ENCODE measurements at regions of chr5 and their contacts with region 1.

Region 1: DNA sequence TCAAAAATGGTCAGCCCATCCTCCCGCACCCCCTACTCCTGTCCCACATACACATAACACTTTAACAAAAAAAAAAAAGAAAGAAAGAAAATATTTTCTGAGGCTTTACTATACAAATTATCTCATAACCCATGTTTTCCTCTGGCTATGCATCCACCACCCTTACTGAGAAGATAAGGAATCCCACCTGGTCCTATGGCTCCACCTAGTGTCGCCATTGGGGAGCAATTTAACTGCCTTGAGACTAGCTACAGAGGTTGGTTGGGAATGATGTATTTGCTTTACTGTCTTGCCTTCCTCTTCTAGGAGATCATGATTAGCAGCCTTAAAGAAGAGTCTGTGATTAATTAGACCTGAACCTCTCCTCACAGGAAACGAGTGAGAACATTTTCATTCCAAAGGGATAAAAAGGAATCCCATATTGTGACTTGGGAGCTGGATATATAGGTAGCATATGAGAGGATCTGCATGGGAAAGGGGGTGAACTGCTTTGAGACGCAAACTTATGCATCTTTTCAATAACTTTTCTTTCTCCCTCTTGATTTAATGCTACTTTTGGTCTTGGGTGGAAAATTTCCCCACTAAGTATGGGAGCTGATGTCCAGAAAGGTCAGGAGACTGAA is 77.7 kb upstream of the SELENOP start:
- DNase-seq: peak; percentile 31 to 75 (median 59)
- ATAC-seq: peak; percentile 79
- H3K4me3 ChIP-seq: no peak overlapping the region
- H3K4me3 Mint-ChIP-seq: no peak overlapping the region
- H3K27ac ChIP-seq: no peak overlapping the region
- H3K27ac Mint-ChIP-seq: no peak overlapping the region
- H3K4me1 ChIP-seq: no peaks in the 10 kb centered on the region
- H3K4me1 Mint-ChIP-seq: no peaks in the 10 kb centered on the region
- H3K27me3 ChIP-seq: no peaks in the 10 kb centered on the region
- H3K27me3 Mint-ChIP-seq: peaks cover 7% of the 10 kb centered on the region
- CTCF ChIP-seq: peak; percentile 84

Region 2: GRCh38 chr5:42057254-42057690 is 832.1 kb before region 1 on chr5:
- CTCF ChIA-PET with region 1: interaction called, 3 read pairs
- POLR2A ChIA-PET with region 1: no interaction called
- intact Hi-C with region 1: loop called in 1 of 2 experiments (anchors 10 kb)
- DNase-seq: peak; percentile 26 to 69 (median 53)
- ATAC-seq: peak; percentile 84
- H3K4me3 ChIP-seq: no peak overlapping the region
- H3K4me3 Mint-ChIP-seq: no peak overlapping the region
- H3K27ac ChIP-seq: no peak overlapping the region
- H3K27ac Mint-ChIP-seq: no peak overlapping the region
- H3K4me1 ChIP-seq: no peaks in the 10 kb centered on the region
- H3K4me1 Mint-ChIP-seq: no peaks in the 10 kb centered on the region
- H3K27me3 ChIP-seq: no peaks in the 10 kb centered on the region
- H3K27me3 Mint-ChIP-seq: peaks cover 10% of the 10 kb centered on the region
- CTCF ChIP-seq: peak; percentile 64

Region 3: GRCh38 chr5:42514754-42515153 is 374.7 kb before region 1 on chr5:
- CTCF ChIA-PET with region 1: no interaction called
- POLR2A ChIA-PET with region 1: no interaction called
- intact Hi-C with region 1: loop called in 1 of 2 experiments (anchors 2 kb)
- DNase-seq: peak in 2 of 9 experiments; percentile 16 to 28
- ATAC-seq: no peak
- H3K4me3 ChIP-seq: no peak overlapping the region
- H3K4me3 Mint-ChIP-seq: no peak overlapping the region
- H3K27ac ChIP-seq: no peak overlapping the region
- H3K27ac Mint-ChIP-seq: no peak overlapping the region
- H3K4me1 ChIP-seq: no peaks in the 10 kb centered on the region
- H3K4me1 Mint-ChIP-seq: no peaks in the 10 kb centered on the region
- H3K27me3 ChIP-seq: no peaks in the 10 kb centered on the region
- H3K27me3 Mint-ChIP-seq: no peaks in the 10 kb centered on the region
- CTCF ChIP-seq: no peak

Region 4: GRCh38 chr5:42583322-42583721 is 306.1 kb before region 1 on chr5:
- CTCF ChIA-PET with region 1: no interaction called
- POLR2A ChIA-PET with region 1: no interaction called
- intact Hi-C with region 1: loop called in 1 of 2 experiments (anchors 2 kb)
- DNase-seq: peak in 5 of 9 experiments; percentile 5 to 51 (median 22)
- ATAC-seq: no peak
- H3K4me3 ChIP-seq: no peak overlapping the region
- H3K4me3 Mint-ChIP-seq: no peak overlapping the region
- H3K27ac ChIP-seq: no peak overlapping the region
- H3K27ac Mint-ChIP-seq: no peak overlapping the region
- H3K4me1 ChIP-seq: no peaks in the 10 kb centered on the region
- H3K4me1 Mint-ChIP-seq: no peaks in the 10 kb centered on the region
- H3K27me3 ChIP-seq: peaks cover 0 to 5% of the 10 kb centered on the region in 2 experiments
- H3K27me3 Mint-ChIP-seq: peaks cover 12% of the 10 kb centered on the region
- CTCF ChIP-seq: peak; percentile 54

Region 5: GRCh38 chr5:42879291-42879690 is 10.1 kb before region 1 on chr5:
- CTCF ChIA-PET with region 1: interaction called, 11 read pairs
- POLR2A ChIA-PET with region 1: no interaction called
- intact Hi-C with region 1: no loop called
- DNase-seq: no peak
- ATAC-seq: no peak
- H3K4me3 ChIP-seq: no peak overlapping the region
- H3K4me3 Mint-ChIP-seq: no peak overlapping the region
- H3K27ac ChIP-seq: no peak overlapping the region
- H3K27ac Mint-ChIP-seq: no peak overlapping the region
- H3K4me1 ChIP-seq: peaks cover 7% of the 10 kb centered on the region
- H3K4me1 Mint-ChIP-seq: peaks cover 8% of the 10 kb centered on the region
- H3K27me3 ChIP-seq: no peaks in the 10 kb centered on the region
- H3K27me3 Mint-ChIP-seq: no peaks in the 10 kb centered on the region
- CTCF ChIP-seq: no peak

Region 6: GRCh38 chr5:43008369-43009153 is 119.1 kb after region 1 on chr5:
- CTCF ChIA-PET with region 1: no interaction called
- POLR2A ChIA-PET with region 1: no interaction called
- intact Hi-C with region 1: no loop called
- DNase-seq: peak; percentile 86 to 97 (median 93)
- ATAC-seq: peak; percentile 63
- H3K4me3 ChIP-seq: peak overlapping the region; percentile 70 to 81
- H3K4me3 Mint-ChIP-seq: peak overlapping the region; percentile 98
- H3K27ac ChIP-seq: peak overlapping the region; percentile 94 to 96
- H3K27ac Mint-ChIP-seq: peak overlapping the region; percentile 96
- H3K4me1 ChIP-seq: peaks cover 25% of the 10 kb centered on the region
- H3K4me1 Mint-ChIP-seq: peaks cover 34% of the 10 kb centered on the region
- H3K27me3 ChIP-seq: no peaks in the 10 kb centered on the region
- H3K27me3 Mint-ChIP-seq: no peaks in the 10 kb centered on the region
- CTCF ChIP-seq: no peak